Left ventricle myocardium superior (tissue), 1 donor: ENCODE measurements at regions of chr3 and their contacts with region 1.

Region 1: GRCh38 chr3:27253831-27254230 is 115.4 kb downstream of the NEK10 start:
- DNase-seq: no peak
- ATAC-seq: peak; percentile 78

Region 2: GRCh38 chr3:27025718-27026117 is 228.1 kb before region 1 on chr3:
- intact Hi-C with region 1: no loop called
- DNase-seq: peak; percentile 25
- ATAC-seq: no peak

Region 3: GRCh38 chr3:27134165-27134796 is 119.5 kb before region 1 on chr3:
- intact Hi-C with region 1: loop called (anchors 10 kb)
- DNase-seq: peak; percentile 54
- ATAC-seq: peak; percentile 70

Region 4: DNA sequence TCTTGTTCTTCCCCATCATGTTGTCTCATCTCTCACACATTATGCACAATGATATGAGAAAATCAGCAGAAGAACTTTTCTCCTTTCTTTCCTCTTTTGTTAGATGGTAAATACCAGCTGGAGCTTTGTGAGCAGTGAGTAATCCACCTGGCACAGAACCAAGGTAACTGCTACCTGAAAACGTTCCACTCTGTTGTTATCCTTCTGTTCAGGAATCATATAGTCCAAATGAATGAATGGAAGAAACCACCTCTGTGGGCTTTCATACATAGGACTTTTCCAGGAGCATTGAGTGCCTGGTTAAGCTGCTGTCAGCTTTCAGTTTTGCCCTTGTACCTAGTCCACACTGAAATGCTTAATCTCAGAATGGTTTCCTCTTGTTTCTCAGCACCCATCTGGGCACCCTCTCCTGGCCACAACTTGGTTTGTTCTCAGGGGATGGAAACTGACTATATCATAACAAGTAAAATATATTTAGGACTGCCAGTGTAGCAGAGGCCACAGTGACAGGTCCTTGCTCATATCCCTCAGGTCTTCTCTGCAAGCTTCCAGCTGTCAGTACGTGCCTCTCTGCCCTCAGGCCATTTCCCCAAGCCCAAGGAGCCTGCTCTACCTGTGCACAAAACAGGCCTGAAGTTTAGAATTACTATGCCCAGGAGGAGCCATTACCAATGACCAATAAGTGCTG is 253.8 kb after region 1 on chr3:
- intact Hi-C with region 1: no loop called
- DNase-seq: no peak
- ATAC-seq: no peak